Heart left ventricle (tissue), 16 donors: ENCODE measurements at regions of chr16 and their contacts with region 1.

Region 1: DNA sequence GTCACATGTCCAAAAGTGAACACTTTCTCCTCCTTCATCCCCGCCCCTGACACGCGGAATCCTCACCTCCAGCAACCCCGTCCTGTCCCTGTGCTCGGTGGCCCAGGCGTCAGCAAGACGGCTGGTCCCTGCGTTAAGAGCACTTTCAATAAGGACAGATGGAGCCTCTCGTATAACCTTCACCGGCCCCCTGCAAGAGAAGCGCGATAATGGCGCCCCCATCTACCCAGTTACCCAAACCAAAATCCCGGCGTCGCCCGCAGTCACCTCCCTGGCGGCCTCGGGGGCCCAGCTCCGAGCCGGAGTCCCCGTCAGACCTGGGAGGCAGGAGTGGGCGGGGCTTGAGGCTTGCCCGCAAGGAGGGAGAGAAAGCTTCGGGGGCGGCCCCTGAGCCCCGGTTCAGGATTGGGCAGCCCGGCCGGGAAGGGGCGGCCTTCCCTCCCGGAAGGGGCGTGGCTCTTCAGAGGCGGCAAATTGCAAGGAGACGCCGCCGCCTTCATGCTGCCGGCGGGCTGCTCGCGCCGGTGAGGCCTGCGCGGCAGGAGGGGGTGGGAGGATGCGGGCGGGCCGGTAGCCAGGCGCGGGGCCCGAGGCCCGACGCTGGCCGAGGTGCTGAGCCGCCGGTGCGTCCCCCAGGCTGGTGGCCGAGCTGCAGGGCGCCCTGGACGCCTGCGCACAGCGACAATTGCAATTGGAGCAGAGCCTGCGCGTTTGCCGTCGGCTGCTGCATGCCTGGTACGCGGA is at the start of gene TEDC2:
- DNase-seq: peak; percentile 96 to 98 (median 98)
- ATAC-seq: peak; percentile 98 to 100 (median 98)
- H3K4me3 ChIP-seq: peak within 1 kb of the TSS; percentile 44 to 74 (median 60)
- H3K27ac ChIP-seq: peak within 1 kb of the TSS in 8 of 12 donors; percentile 3 to 68 (median 55)
- H3K4me1 ChIP-seq: peaks cover 0 to 19% (median 10%) of the 10 kb centered on the region in 12 donors
- H3K27me3 ChIP-seq: no peaks in the 10 kb centered on the region
- CTCF ChIP-seq: no peak
- POLR2A ChIP-seq: no peak
- total RNA-seq, gene TEDC2: 0.60 to 4.9 (median 1.2) TPM in 8 of 9 donors, not detected in the other

Region 2: DNA sequence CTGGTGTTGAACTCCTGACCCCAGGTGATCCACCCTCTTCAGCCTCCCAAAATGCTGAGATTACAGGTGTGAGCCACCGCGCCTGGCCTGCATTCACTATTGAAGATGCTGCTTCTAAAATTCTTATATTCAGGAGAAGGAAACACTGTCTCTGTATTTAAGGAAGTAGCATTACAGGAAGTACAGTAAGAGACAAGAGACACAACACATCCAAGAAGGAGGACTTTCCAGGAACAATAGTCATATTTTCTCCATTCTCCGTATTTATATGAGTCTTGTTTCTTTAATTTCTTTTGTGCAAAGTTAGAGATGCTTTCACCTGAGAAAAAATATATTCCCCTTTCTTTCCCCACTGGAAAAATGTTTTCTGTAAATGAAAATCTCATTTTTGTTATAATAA is 101.0 kb before region 1 on chr16:
- intact Hi-C with region 1: no loop called
- DNase-seq: no peak
- ATAC-seq: no peak
- H3K4me3 ChIP-seq: no peak overlapping the region
- H3K27ac ChIP-seq: no peak overlapping the region
- H3K4me1 ChIP-seq: no peaks in the 10 kb centered on the region
- H3K27me3 ChIP-seq: peaks cover 0 to 17% (median 0%) of the 10 kb centered on the region in 9 donors
- CTCF ChIP-seq: no peak
- POLR2A ChIP-seq: no peak

Region 3: DNA sequence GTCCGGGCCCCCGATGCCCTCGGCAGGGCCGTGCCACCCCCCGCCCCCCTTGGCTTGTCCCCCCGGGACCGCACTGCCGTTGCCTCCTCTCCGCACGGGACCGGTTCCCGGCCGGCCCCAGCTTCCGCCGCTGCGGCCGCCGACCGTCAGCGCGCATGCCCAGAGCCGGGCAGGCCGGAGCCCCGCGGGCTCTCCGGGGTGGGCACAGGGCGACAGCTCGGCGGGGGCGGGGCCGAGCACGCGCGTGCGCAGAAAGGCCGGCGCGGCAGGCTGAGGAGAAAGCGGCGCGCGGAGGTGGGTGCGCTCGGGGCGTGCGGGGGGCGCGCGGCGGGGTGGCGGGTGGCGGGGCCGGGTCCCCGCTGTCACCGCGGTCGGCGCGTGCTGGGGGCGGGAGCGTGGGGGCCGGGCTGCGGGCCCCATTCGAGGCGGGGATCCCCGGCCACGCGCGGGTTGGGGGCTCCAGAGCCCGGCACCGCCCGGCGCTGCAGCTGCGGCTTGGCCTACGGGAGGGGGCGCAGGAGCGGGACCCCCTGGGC is 15.1 kb after region 1 on chr16 and contains the start of gene TBC1D24:
- intact Hi-C with region 1: loop called in 1 of 10 experiments (anchors 1 kb)
- DNase-seq: peak; percentile 88 to 95 (median 90)
- ATAC-seq: peak; percentile 80 to 93 (median 93)
- H3K4me3 ChIP-seq: peak within 1 kb of the TSS; percentile 62 to 87 (median 77)
- H3K27ac ChIP-seq: peak within 1 kb of the TSS; percentile 13 to 95 (median 88)
- H3K4me1 ChIP-seq: peaks cover 9 to 48% (median 28%) of the 10 kb centered on the region in 12 donors
- H3K27me3 ChIP-seq: peaks cover 11 to 36% (median 28%) of the 10 kb centered on the region in 9 donors
- CTCF ChIP-seq: no peak
- POLR2A ChIP-seq: peak in 1 of 2 donors; percentile 82
- total RNA-seq, gene TBC1D24: 8.9 to 19.2 (median 11.9) TPM